Caco-2 (cell line): ENCODE measurements at regions of chr3 and their contacts with region 1.

Region 1: DNA sequence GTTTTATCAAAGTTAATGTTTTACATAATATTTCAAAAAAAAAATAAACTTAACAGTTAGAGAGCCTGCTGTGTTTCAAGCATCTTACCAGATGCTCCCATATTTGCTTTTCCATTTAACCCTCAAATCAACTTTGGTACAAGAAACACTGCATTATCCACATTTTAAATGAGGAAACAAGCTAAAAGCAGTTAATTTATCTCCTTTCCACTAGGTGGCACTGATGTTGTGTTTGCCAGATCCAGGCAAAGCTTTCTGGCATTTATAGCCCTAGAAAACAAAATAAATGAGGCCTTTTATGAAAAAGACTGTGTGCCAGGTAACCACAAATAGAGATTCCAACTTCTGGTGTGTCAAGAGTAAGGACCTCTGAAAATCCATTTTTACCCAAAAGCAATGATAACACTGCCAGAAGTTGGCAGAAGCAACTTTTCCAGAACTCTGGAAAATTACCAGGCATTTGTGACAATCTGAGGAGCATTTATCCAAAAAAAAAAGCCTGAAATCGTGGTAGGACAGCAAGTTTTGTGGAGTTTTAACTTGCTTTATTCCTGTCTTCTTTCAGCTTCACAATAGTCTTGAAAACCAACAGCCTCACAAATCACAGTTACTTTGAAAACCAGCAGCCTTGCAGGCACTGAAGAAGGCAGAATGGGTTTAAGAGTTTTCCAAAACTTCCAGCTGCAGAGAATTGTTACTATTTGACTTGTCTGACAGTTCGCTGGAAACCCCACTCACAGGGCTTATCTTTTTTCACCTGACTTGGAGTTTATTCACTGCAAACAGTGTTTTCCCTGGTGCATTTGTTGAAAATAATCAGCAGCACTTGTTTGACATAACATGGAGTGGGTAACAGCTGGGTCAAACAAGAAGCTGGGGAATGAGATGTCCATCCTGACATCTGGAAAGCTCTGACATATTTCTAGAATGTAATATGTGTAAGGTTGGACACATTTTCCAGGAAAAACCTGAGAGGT is 9.2 kb downstream of the FAM162A start:
- DNase-seq: peak in 1 of 2 experiments; percentile 39
- H3K4me3 ChIP-seq: no peak overlapping the region
- H3K4me3 Mint-ChIP-seq: no peak overlapping the region
- H3K27ac Mint-ChIP-seq: no peak overlapping the region
- H3K4me1 ChIP-seq: 0 out of 2 replicates have a peak, but pooled peaks cover 4% of the 10 kb centered on the region
- H3K4me1 Mint-ChIP-seq: no peaks in the 10 kb centered on the region
- H3K27me3 ChIP-seq: no peaks in the 10 kb centered on the region
- H3K27me3 Mint-ChIP-seq: no peaks in the 10 kb centered on the region
- CTCF ChIP-seq: peak; percentile 54 to 73

Region 2: DNA sequence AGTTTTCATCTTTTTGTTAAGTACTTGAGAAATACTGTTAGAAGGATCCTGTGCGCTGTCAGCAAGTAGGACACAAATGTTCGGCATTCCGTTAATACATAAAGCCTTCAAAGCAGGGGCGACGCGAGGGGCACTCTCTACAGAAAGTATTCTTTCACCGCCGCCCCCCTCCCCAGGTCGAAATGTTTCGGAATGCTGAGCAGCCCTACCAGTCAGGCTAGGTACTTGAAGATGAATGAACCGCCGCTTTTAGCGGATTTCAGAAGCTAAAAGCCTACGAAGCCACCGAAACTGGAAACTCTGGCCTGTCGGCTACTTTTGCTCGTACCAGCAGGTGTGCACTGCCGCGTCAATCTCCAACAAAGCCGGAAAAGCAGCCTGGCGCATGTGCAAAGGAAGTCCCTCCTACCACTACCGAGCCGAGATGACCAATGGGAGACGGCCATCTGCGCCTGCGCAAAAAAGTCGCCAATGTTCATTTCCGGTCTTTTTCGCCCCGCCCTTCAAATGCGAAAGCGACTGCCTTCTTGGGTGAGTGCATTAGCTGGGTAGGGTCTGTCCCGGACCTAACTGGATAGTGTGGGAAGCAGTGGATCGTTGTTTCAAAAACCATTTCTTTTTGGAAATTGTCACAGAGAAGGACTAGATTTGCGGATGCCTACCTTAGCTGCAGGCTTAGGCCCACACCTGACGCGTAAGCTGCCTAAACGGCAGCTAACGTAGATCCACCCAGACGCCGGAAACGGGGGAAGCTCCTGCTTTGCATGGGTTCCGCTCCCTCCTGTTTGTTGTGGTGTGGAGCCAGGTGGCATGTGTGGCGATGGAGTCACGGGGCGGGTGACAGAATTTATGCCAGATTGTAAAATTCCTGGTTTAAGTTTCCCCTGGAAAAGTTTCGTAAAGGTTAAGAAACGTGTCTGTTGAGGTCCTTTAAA is 22.8 kb after region 1 on chr3 and contains the start of gene WDR5B:
- CTCF ChIA-PET with region 1: interaction called, 5 read pairs
- POLR2A ChIA-PET with region 1: no interaction called
- intact Hi-C with region 1: loop called (anchors 2 kb)
- DNase-seq: peak; percentile 97
- H3K4me3 ChIP-seq: peak within 1 kb of the TSS; percentile 71
- H3K4me3 Mint-ChIP-seq: peak within 1 kb of the TSS; percentile 96
- H3K27ac Mint-ChIP-seq: peak within 1 kb of the TSS; percentile 94
- H3K4me1 ChIP-seq: no peaks in the 10 kb centered on the region; the same call in 1 of the 2 replicates
- H3K4me1 Mint-ChIP-seq: peaks cover 12% of the 10 kb centered on the region
- H3K27me3 ChIP-seq: no peaks in the 10 kb centered on the region
- H3K27me3 Mint-ChIP-seq: no peaks in the 10 kb centered on the region
- CTCF ChIP-seq: no peak
- total RNA-seq, gene WDR5B: 4.4 and 4.7 TPM in 2 replicates